Heart right ventricle (tissue), 16 donors: ENCODE measurements at regions of chr4 and their contacts with region 1.

Region 1: DNA sequence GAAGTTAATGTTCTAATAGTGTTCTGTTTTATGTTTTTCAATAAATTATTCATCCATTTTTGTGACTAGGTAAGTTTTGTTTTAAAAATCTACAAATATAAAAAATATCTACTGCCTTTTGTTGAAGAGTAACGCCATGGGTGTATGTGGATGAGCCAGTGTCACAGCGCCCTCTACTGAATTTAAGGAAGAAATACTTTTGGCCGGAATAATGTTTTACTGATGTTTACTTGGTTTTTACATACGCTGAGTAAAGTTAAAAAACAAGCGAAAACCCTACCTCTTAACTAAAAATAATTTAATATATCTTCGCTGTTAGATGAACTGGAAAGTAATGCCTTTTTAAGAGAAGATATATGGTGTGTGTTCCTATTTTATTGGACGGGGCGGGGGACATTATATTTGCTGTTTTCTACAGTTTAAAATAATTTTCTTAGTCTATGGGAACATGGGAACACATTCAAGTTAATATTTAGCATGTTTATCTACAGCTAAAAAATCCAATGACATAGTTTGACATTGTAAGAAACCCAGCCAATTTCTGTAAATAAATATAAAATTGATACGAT is 86.1 kb downstream of the CPE start:
- DNase-seq: no peak
- ATAC-seq: peak in 6 of 8 donors; percentile 59 to 75 (median 65)
- H3K4me3 ChIP-seq: no peak overlapping the region
- H3K27ac ChIP-seq: no peak overlapping the region
- H3K4me1 ChIP-seq: peaks cover 0 to 14% (median 0%) of the 10 kb centered on the region in 9 donors
- H3K27me3 ChIP-seq: no peaks in the 10 kb centered on the region
- CTCF ChIP-seq: peak; percentile 65 to 88 (median 81)

Region 2: DNA sequence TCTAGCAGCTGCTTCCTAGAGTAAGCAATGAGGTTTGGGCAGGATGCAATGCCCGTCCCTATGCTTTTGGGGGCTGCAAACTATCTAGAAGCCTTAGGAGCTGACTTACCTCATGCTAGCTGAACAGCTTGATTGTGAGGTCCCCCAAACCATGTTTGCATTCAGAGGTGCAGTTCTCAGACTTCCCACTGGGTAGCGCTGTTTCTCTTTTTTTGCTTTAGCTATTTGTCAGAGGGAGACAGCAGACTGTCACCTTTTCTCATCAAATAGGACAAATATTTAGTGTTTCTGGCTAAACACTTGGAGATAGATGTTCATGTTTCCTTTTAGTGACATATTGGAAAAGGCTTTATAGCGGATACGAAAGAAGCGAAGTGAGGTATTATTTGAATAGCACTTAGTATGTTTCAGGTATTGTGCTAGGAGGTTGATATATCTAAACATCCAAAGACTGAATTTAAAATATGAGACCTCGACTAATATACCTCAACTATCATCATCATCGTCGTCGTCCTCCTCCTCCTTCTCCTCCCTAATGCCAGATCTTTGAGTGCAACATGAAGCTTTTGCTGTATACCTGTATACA is 333.6 kb before region 1 on chr4:
- intact Hi-C with region 1: loop called (anchors 1 to 5 kb)
- DNase-seq: peak in 1 of 2 donors; percentile 60
- ATAC-seq: peak in 6 of 8 donors; percentile 61 to 77 (median 72)
- H3K4me3 ChIP-seq: no peak overlapping the region
- H3K27ac ChIP-seq: no peak overlapping the region
- H3K4me1 ChIP-seq: peaks cover 0 to 26% (median 0%) of the 10 kb centered on the region in 9 donors
- H3K27me3 ChIP-seq: peaks cover 0 to 14% (median 0%) of the 10 kb centered on the region in 7 donors
- CTCF ChIP-seq: peak; percentile 62 to 96 (median 90)

Region 3: DNA sequence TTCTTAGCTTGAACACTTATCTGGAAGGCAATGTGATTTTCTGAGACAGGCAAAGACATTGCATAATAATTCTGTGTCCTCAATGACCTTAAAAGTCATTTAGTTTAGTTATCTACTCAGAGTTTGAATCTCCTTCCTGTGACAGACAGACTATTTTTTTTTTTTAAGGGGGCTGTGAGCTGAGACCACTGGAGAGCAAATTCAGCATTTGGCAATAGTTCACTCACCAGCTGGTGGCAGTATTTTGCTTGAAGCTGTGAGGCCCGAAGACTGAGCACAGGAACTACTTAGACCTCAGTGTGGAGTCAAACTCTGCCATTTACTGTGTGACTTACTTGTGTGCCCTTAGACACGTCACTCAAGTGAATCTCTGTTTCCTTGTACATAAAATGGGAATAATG is 109.0 kb before region 1 on chr4:
- intact Hi-C with region 1: loop called in 8 of 10 experiments (anchors 1 to 10 kb)
- DNase-seq: peak in 1 of 2 donors; percentile 8
- ATAC-seq: peak in 1 of 8 donors; percentile 67
- H3K4me3 ChIP-seq: no peak overlapping the region
- H3K27ac ChIP-seq: no peak overlapping the region
- H3K4me1 ChIP-seq: peaks cover 0 to 32% (median 0%) of the 10 kb centered on the region in 9 donors
- H3K27me3 ChIP-seq: peaks cover 0 to 21% (median 4%) of the 10 kb centered on the region in 7 donors
- CTCF ChIP-seq: peak in 8 of 9 donors; percentile 7 to 58 (median 44)

Region 4: GRCh38 chr4:165364452-165365080 is 100.3 kb before region 1 on chr4:
- intact Hi-C with region 1: loop called in 7 of 10 experiments (anchors 10 kb)
- DNase-seq: no peak
- ATAC-seq: no peak
- H3K4me3 ChIP-seq: no peak overlapping the region
- H3K27ac ChIP-seq: no peak overlapping the region
- H3K4me1 ChIP-seq: peaks cover 0 to 15% (median 0%) of the 10 kb centered on the region in 9 donors
- H3K27me3 ChIP-seq: peaks cover 0 to 9% (median 0%) of the 10 kb centered on the region in 7 donors
- CTCF ChIP-seq: no peak

Region 5: GRCh38 chr4:165378745-165379677 is 85.9 kb before region 1 on chr4 and contains the start of gene CPE:
- intact Hi-C with region 1: loop called in 2 of 10 experiments (anchors 5 kb)
- DNase-seq: peak; percentile 75 to 76
- ATAC-seq: peak; percentile 95 to 99 (median 97)
- H3K4me3 ChIP-seq: peak within 1 kb of the TSS; percentile 12 to 63 (median 56)
- H3K27ac ChIP-seq: peak within 1 kb of the TSS in 9 of 10 donors; percentile 4 to 74 (median 64)
- H3K4me1 ChIP-seq: peaks cover 0 to 12% (median 3%) of the 10 kb centered on the region in 9 donors
- H3K27me3 ChIP-seq: peaks cover 0 to 74% (median 23%) of the 10 kb centered on the region in 7 donors
- CTCF ChIP-seq: peak in 7 of 9 donors; percentile 15 to 59 (median 46)
- total RNA-seq, gene CPE: 16.9 to 57.6 (median 28.1) TPM

Region 6: GRCh38 chr4:165384598-165384997 is 80.3 kb before region 1 on chr4:
- intact Hi-C with region 1: loop called in 2 of 10 experiments (anchors 5 kb)
- DNase-seq: no peak
- ATAC-seq: no peak
- H3K4me3 ChIP-seq: no peak overlapping the region
- H3K27ac ChIP-seq: peak overlapping the region in 1 of 10 donors; percentile 19
- H3K4me1 ChIP-seq: peaks cover 0 to 11% (median 0%) of the 10 kb centered on the region in 9 donors
- H3K27me3 ChIP-seq: peaks cover 0 to 42% (median 6%) of the 10 kb centered on the region in 7 donors
- CTCF ChIP-seq: no peak

Region 7: DNA sequence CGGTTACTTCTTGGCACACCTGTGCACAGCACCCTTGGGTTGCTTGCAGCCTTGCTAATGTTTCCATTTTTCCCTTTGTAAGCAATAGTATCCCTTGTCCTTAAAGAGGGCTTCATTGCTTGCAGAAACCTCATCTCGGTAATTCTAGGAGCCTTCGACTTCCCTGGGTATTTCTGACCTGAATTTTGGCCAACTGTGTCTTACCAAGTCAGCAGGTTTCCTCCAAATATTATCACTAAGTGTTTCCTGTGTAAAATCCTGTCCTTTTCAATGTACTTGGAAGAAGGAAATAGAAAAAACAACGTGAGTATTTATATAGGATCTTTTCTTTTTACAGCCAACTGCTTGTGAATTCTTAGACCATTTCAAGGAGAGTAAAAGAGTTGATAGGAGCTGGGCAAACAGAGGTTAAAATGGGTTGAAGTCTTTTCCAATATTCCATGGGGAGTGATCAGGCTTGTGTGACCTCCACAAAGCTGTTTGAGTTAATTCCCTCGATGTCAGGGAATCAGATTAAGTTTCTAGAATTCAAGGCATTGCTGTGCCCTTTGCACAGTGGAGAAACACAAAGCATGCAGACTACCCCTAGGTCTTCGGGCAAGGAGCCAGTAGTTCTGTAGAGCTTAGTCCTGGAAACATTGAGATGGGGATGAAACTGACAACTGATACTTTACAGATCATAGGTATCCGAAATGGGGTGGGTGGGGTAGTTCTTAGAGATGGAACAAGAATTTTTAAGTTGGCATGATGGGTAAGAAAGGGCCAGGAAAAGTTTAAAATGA is 123.8 kb after region 1 on chr4:
- intact Hi-C with region 1: no loop called
- DNase-seq: no peak
- ATAC-seq: peak in 1 of 8 donors; percentile 19
- H3K4me3 ChIP-seq: no peak overlapping the region
- H3K27ac ChIP-seq: no peak overlapping the region
- H3K4me1 ChIP-seq: peaks cover 0 to 8% (median 0%) of the 10 kb centered on the region in 9 donors
- H3K27me3 ChIP-seq: no peaks in the 10 kb centered on the region
- CTCF ChIP-seq: no peak